ENCODE measurements at regions of chr19 and their contacts with region 1.

Region 1: DNA sequence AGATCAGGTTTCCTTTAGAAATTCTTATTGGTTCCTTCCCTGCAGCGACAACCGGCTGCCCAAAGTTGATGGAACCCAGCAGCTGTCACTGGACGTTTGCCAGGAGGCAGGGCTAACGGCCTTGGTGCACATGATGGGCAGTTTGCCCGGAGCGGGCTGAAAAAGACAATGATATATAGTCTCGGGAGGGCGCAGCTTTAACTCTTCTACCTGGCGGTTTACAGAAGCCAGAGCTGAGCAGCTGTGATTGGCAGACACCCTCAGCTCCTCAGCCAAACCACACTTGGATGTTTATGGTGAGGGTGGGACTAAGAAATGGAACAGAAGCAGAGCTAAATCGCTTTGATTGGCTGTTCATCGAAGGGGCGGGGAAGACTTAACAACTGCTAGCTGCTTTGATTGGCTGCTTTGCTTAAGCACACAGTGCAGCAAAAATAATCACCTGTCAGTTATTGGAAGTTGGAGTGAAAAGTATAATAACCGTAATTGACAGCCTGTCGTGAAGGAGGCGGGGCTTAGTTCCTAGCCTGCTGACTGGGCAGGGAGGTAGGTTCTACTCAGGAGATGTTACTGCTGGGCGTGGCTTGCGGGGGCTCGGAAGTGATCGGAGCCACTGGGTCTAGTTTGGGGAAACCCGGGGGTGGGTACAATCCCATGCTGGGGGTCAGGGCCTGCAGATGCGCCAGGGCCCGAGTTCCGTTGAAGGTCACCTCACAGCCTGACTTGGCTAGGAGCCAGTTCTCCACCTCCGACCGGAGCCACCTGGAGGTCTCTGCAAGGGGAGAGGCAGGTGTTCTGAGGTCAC is 7.5 kb downstream of the EMP3 start:
- H3K4me3 ChIP-seq: peak overlapping the region; percentile 26
- H3K27ac ChIP-seq: peak overlapping the region; percentile 85
- H3K4me1 ChIP-seq: peaks cover 15% of the 10 kb centered on the region
- CTCF ChIP-seq: no peak

Region 2: GRCh38 chr19:48279747-48280146 is 53.1 kb before region 1 on chr19:
- CTCF ChIA-PET with region 1: no interaction called
- POLR2A ChIA-PET with region 1: no interaction called
- H3K4me3 ChIP-seq: no peak overlapping the region
- H3K27ac ChIP-seq: no peak overlapping the region
- H3K4me1 ChIP-seq: no peaks in the 10 kb centered on the region
- CTCF ChIP-seq: no peak

Region 3: DNA sequence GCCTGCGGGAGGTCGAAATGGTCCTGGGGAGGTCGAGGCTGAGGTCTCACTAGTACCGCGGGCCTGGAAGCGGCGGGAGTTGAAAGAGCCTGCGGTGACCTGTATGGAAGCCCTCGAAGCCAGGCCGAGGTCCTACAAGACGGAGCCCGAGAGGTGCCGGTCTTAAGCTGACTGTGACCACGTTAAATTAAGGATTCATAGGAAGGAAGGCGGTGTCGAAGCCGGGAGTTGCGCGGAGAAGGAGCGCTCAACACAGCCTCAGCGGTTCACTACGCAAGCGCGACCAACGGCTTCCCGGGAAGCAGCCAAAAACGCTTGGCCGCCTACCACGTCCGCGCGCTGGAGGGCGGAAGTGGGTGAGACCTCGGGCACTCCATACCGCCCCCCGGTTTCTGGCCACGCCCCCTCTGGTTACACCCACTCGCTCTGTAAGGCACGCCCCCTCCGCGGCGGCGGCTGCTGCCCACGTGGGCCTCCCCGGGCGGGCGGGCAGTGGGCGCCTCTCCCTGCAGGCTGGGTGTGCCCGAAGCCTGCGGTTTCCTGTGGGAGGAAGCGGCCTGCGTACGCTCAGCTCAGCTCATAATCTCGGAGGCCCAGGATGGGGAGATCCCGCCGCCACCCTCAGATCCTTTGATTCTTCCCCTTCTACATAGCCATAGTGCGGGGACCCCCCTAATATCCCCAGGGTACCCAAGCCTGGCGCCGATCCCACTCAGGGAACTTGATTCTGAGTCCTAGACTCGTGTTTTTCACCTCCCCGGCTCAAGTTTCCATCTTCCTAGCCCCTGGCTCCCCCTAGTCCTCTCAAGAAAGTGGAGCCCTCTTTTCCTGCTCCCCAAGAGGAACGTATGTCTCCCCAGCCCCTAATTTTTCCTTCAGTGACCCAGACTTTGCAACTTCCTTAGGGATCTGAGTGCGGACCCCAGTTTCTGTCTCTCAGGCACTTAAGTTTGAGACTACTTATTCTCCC is 11.0 kb before region 1 on chr19:
- CTCF ChIA-PET with region 1: interaction called, 104 read pairs
- POLR2A ChIA-PET with region 1: interaction called, 49 read pairs
- H3K4me3 ChIP-seq: peak overlapping the region; percentile 49
- H3K27ac ChIP-seq: peak overlapping the region; percentile 88
- H3K4me1 ChIP-seq: peaks cover 18% of the 10 kb centered on the region
- CTCF ChIP-seq: peak; percentile 74

Region 4: DNA sequence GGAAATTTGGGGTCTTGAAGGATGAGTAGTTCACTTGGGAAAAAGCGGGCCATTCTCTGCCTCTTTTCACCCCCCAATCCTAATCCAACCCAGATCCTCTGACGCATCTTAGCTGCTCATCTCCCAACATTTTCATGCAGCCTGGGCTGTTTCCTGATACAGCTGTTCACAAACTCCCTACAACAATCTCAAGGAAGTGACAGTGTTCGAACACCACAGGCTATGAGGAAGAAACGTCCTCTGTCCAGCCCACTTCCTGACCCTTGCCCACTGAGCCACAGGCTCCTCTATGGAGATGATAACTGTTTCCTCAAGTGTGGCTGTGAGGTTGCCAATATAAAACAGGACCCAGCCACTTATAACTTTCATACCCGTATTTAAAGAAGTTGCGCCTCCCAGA is 162.5 kb after region 1 on chr19:
- CTCF ChIA-PET with region 1: no interaction called
- POLR2A ChIA-PET with region 1: no interaction called
- H3K4me3 ChIP-seq: no peak overlapping the region
- H3K27ac ChIP-seq: no peak overlapping the region
- H3K4me1 ChIP-seq: peaks cover 6% of the 10 kb centered on the region
- CTCF ChIP-seq: no peak